A549 (cell line): ENCODE measurements at regions of chr21 and their contacts with region 1.

Region 1: GRCh38 chr21:38787461-38788274 is 18.1 kb upstream of the ETS2 start:
- DNase-seq: peak; percentile 79 to 90
- ATAC-seq: peak; percentile 98 to 99
- H3K4me3 ChIP-seq: 0 out of 3 replicates have a peak overlapping the region, but pooled peaks have one; percentile 17
- H3K27ac ChIP-seq: peak overlapping the region; percentile 89 to 95
- H3K4me1 ChIP-seq: peaks cover 37% of the 10 kb centered on the region
- CTCF ChIP-seq: no peak
- EP300 ChIP-seq: peak; percentile 55 to 80; a peak in 3 of 5 replicates
- POLR2A ChIP-seq: no peak
- RAD21 ChIP-seq: peak; percentile 18 to 63; a peak in 3 of 5 replicates

Region 2: GRCh38 chr21:38774152-38774551 is 13.5 kb before region 1 on chr21:
- CTCF ChIA-PET with region 1: interaction called, 13 read pairs
- POLR2A ChIA-PET with region 1: no interaction called
- DNase-seq: no peak
- ATAC-seq: no peak
- H3K4me3 ChIP-seq: no peak overlapping the region
- H3K27ac ChIP-seq: peak overlapping the region; percentile 73 to 80
- H3K4me1 ChIP-seq: peaks cover 36% of the 10 kb centered on the region
- CTCF ChIP-seq: no peak
- EP300 ChIP-seq: no peak
- POLR2A ChIP-seq: no peak
- RAD21 ChIP-seq: no peak

Region 3: DNA sequence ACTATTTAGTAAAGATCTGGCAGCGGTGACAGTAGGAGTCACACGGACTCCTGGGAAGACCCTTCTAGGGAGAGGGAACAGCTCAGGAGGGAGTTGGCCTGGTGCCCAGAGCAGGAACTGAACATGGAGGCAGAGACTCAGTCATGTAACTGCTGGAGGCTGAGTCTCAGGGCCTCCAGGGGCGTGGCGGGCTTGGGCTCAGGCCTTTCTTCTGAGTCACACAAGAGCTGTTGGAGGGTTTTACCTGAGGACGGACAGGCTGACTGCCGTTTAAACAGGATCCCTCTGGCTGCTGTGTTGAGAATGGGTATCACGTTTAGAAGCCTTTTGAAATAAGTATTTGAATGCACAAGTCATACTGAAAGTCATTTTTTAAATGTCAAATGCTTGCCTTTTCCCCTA is 10.8 kb after region 1 on chr21:
- CTCF ChIA-PET with region 1: interaction called, 6 read pairs
- POLR2A ChIA-PET with region 1: interaction called, 10 read pairs
- DNase-seq: peak; percentile 69 to 92
- ATAC-seq: peak; percentile 73 to 82
- H3K4me3 ChIP-seq: 0 out of 3 replicates have a peak overlapping the region, but pooled peaks have one; percentile 14
- H3K27ac ChIP-seq: peak overlapping the region; percentile 98 to 99
- H3K4me1 ChIP-seq: peaks cover 85% of the 10 kb centered on the region
- CTCF ChIP-seq: no peak
- EP300 ChIP-seq: no peak
- POLR2A ChIP-seq: no peak
- RAD21 ChIP-seq: 0 out of 5 replicates have a peak, but pooled peaks of 1 of the 2 experiments have one; percentile 12